B cell (primary cell): ENCODE measurements at regions of chr15 and their contacts with region 1.

Region 1: DNA sequence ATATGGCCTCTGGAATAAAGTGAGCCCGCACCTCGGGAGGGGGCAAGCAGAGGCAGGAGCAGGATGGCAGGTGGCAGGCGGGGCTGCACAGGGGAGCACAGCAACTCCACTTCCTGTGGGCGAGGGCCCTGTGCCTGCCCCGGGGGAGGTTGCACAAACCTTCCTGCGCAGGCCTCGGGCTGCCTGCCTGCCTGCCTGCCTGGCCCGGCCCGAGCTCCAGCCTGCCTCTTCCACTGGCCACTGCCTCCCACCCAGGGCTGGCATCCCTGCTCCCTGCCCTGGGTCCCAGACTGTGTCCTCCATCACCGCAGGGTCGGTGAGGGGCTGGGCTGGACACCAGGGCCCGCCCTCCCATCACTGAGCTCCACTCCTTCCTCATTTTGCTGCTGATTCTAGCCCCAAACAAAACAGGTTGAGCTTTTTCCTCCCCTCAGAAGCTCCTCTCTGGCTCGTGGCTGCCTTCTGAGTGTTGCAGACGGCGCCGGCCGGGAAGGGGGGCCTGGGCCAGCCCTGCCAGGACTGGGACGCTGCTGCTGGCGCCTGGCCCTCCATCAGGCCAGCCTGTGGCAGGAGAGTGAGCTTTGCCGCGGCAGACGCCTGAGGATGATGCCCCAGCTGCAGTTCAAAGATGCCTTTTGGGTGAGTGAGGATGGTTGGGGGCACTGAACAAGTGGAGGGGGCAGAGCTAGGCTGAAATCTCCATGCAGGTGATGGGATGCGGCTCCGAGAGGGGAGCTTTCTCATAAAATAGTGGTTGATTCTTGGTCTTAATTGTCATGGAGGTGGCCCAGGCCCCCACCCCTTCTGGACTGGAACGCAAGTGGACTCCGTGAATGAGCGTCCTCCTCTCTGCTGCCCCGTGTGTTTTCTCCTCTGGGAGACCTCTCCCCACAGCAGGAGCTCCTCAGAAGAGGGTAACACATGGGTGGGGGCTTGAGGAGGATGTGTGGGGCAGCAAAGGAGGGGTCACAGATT is at the start of gene PSTPIP1:
- DNase-seq: peak; percentile 80
- ATAC-seq: peak; percentile 89
- H3K4me3 ChIP-seq: peak within 1 kb of the TSS; percentile 74 to 86 (median 79)
- H3K4me3 Mint-ChIP-seq: peak within 1 kb of the TSS; percentile 99
- H3K27ac ChIP-seq: peak within 1 kb of the TSS; percentile 79 to 81
- H3K27ac Mint-ChIP-seq: peak within 1 kb of the TSS; percentile 100
- H3K4me1 ChIP-seq: peaks cover 38 to 57% of the 10 kb centered on the region in 2 donors
- H3K4me1 Mint-ChIP-seq: peaks cover 51% of the 10 kb centered on the region
- H3K27me3 ChIP-seq: no peaks in the 10 kb centered on the region
- H3K27me3 Mint-ChIP-seq: no peaks in the 10 kb centered on the region
- CTCF ChIP-seq: no peak
- total RNA-seq, gene PSTPIP1: 67.1 and 69.0 TPM in 2 replicates

Region 2: DNA sequence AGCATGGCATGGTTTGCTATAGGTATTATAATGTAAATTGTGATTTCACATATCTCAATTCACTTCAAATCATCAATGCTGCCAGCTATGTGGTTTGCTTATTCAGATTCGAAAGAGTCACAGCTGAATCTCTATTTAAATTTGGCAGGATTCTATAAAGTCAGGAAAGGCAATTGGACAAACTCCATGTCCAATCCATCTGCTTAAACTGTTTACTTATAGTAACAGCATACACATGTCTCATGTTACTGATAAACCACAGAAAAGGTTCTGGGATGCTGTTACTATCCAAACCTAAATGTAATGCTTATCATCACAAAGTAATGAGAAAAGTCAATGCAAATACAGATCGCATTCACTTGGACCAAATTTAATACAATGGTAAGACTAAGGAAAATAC is 429.0 kb before region 1 on chr15:
- CTCF ChIA-PET with region 1: no interaction called
- POLR2A ChIA-PET with region 1: no interaction called
- intact Hi-C with region 1: no loop called
- DNase-seq: no peak
- ATAC-seq: no peak
- H3K4me3 ChIP-seq: no peak overlapping the region
- H3K4me3 Mint-ChIP-seq: no peak overlapping the region
- H3K27ac ChIP-seq: no peak overlapping the region
- H3K27ac Mint-ChIP-seq: no peak overlapping the region
- H3K4me1 ChIP-seq: peaks cover 2 to 12% of the 10 kb centered on the region in 2 donors
- H3K4me1 Mint-ChIP-seq: peaks cover 16% of the 10 kb centered on the region
- H3K27me3 ChIP-seq: no peaks in the 10 kb centered on the region
- H3K27me3 Mint-ChIP-seq: no peaks in the 10 kb centered on the region
- CTCF ChIP-seq: no peak

Region 3: DNA sequence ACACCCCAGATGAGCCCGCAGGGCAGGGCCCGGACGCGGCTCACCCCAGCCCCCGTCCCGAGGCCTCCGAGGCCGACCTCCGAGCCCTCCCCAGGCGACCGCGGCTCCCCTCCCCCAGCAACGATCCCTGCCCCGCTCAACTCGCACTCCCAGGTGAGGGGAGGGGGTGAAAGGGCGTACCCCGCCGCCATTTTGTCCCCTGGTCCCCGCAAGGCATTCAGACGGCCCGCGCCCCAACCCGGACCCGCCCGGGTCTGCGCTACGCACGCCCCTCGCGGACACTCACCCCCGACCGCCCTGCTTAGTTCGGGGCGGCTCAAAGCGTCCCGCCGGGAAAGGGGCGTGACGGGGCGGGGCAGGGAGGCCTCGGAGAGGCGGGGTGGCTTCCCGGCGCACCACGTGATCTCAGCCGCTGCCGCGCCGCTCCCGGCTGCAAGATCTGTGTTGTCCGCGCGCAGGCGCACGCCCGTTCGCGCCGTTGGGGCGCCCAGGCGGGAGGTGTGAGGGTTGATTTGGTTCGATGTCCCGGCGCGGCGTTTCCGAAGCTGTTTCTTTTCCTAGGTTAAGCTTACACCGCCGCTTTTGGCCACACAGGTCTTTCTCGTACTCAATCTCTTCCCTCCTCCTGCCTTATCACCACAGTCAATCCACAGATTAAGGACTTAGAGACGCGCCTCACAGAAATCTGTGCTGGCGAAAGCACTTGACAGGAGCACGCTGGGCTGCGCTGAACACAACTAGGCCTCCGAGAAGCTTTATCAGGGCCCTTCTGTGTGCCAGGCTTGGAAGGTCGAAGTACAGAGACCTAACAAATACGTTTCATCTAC is 90.0 kb before region 1 on chr15 and contains the start of gene SCAPER:
- CTCF ChIA-PET with region 1: no interaction called
- POLR2A ChIA-PET with region 1: interaction called, 3 read pairs
- intact Hi-C with region 1: loop called (anchors 10 kb)
- DNase-seq: peak; percentile 94
- ATAC-seq: peak; percentile 88
- H3K4me3 ChIP-seq: peak within 1 kb of the TSS; percentile 76 to 93 (median 80)
- H3K4me3 Mint-ChIP-seq: peak within 1 kb of the TSS; percentile 91
- H3K27ac ChIP-seq: peak within 1 kb of the TSS; percentile 82 to 92
- H3K27ac Mint-ChIP-seq: peak within 1 kb of the TSS; percentile 89
- H3K4me1 ChIP-seq: peaks cover 32 to 36% of the 10 kb centered on the region in 2 donors
- H3K4me1 Mint-ChIP-seq: peaks cover 52% of the 10 kb centered on the region
- H3K27me3 ChIP-seq: no peaks in the 10 kb centered on the region
- H3K27me3 Mint-ChIP-seq: no peaks in the 10 kb centered on the region
- CTCF ChIP-seq: no peak
- total RNA-seq, gene SCAPER: 59.5 and 61.6 TPM in 2 replicates

Region 4: GRCh38 chr15:76916369-76916768 is 78.9 kb before region 1 on chr15:
- CTCF ChIA-PET with region 1: no interaction called
- POLR2A ChIA-PET with region 1: no interaction called
- intact Hi-C with region 1: no loop called
- DNase-seq: no peak
- ATAC-seq: no peak
- H3K4me3 ChIP-seq: no peak overlapping the region
- H3K4me3 Mint-ChIP-seq: no peak overlapping the region
- H3K27ac ChIP-seq: no peak overlapping the region
- H3K27ac Mint-ChIP-seq: no peak overlapping the region
- H3K4me1 ChIP-seq: no peaks in the 10 kb centered on the region
- H3K4me1 Mint-ChIP-seq: no peaks in the 10 kb centered on the region
- H3K27me3 ChIP-seq: peaks cover 0 to 5% (median 2%) of the 10 kb centered on the region in 4 experiments
- H3K27me3 Mint-ChIP-seq: peaks cover 15% of the 10 kb centered on the region
- CTCF ChIP-seq: no peak